ENCODE measurements at regions of chr11 and their contacts with region 1.

Region 1: DNA sequence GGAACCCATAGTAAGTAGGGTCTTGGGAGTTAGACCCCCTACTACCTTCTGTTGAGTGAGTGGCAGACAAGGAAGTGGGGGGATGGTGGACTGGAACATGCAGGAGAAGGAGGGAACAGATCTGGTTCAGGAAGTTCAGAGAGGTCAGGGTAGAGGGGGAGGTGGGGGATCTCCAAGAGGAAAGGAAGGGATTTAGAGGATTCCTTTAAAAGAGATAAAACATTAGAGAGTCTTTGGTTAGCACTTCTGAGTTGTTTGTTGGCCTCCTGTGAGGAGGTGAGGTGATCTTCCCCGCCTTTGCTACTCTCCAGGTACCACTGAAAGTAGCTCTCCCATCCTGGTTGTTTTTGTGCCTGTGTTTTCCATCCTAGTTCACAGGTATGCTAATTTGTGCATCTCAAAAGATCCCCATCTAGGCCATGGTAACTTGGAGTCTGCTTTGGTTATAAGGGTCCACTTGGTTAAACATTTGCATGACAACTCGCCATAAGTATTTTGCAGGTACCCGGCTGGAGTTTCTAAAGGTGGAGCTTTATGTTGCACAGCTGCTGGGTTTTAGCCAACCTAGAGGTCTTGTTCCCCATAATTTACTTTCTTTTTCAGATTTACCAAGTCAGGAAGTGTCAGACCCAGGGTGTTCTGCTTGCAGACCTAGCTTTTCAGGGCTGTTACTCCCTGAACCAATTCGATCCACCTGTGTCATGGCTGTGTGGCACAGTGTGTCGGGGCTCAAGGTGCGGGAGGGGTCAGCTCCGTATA is 79.3 kb upstream of the SORL1 start:
- DNase-seq: peak; percentile 82
- ATAC-seq: peak; percentile 89
- H3K4me3 ChIP-seq: peak overlapping the region; percentile 46; the same call in 1 of the 2 replicates
- H3K27ac ChIP-seq: peak overlapping the region; percentile 80
- H3K4me1 ChIP-seq: peaks cover 53% of the 10 kb centered on the region
- H3K27me3 ChIP-seq: no peaks in the 10 kb centered on the region
- CTCF ChIP-seq: no peak
- EP300 ChIP-seq: no peak
- POLR2A ChIP-seq: peak; percentile 69
- RAD21 ChIP-seq: 0 out of 2 replicates have a peak, but pooled peaks have one; percentile 4

Region 2: DNA sequence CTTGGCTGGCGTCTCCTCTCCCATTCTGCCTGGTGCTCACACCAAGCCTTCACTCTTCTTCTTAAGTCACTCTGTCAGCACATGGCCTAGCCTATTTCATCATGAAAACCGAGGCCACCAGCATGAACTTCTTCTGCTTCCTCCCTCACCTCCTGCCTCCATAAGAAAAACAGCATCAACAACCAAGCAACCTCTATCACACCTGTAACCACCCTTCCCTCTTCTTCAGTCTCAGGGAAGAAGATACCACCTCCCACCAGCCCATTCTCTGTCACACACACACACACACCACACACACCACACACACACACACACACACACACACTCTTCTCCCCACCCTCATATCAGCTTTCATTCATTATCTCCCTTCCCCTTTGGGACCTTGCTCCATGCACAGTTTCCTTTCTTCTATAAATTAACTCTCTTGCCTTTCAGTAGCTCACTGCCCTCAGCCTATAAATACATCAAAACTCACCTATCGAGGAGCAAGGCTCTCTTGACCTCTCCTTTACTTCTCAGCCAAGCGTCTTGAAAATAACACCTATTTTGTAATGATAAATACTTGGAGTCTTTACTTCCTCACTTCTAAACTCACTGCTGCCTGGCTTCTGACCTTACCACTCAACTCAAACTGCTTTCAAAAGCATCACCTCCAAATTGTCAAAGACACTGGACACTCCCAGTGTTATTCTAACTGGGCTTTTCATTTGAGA is 43.7 kb before region 1 on chr11:
- CTCF ChIA-PET with region 1: interaction called, 10 read pairs
- POLR2A ChIA-PET with region 1: interaction called, 10 read pairs
- RAD21 ChIA-PET with region 1: interaction called, 15 read pairs
- SMC1A ChIA-PET with region 1: interaction called, 338 read pairs
- in situ Hi-C with region 1: no loop called
- intact Hi-C with region 1: loop called (anchors 5 kb)
- DNase-seq: no peak
- ATAC-seq: peak; percentile 68
- H3K4me3 ChIP-seq: no peak overlapping the region
- H3K27ac ChIP-seq: peak overlapping the region; percentile 13; the same call in 1 of the 2 replicates
- H3K4me1 ChIP-seq: peaks cover 18% of the 10 kb centered on the region
- H3K27me3 ChIP-seq: no peaks in the 10 kb centered on the region
- CTCF ChIP-seq: no peak
- EP300 ChIP-seq: no peak
- POLR2A ChIP-seq: no peak
- RAD21 ChIP-seq: no peak

Region 3: GRCh38 chr11:121389651-121390050 is 16.8 kb after region 1 on chr11:
- CTCF ChIA-PET with region 1: interaction called, 8 read pairs
- POLR2A ChIA-PET with region 1: interaction called, 4 read pairs
- RAD21 ChIA-PET with region 1: interaction called, 7 read pairs
- SMC1A ChIA-PET with region 1: interaction called, 16 read pairs
- in situ Hi-C with region 1: no loop called
- intact Hi-C with region 1: no loop called
- DNase-seq: no peak
- ATAC-seq: no peak
- H3K4me3 ChIP-seq: no peak overlapping the region
- H3K27ac ChIP-seq: no peak overlapping the region
- H3K4me1 ChIP-seq: peaks cover 11% of the 10 kb centered on the region
- H3K27me3 ChIP-seq: no peaks in the 10 kb centered on the region
- CTCF ChIP-seq: no peak
- EP300 ChIP-seq: no peak
- POLR2A ChIP-seq: no peak
- RAD21 ChIP-seq: no peak

Measured in GM12878 (cell line).